OCI-LY7 (cell line): ENCODE measurements at regions of chr11 and their contacts with region 1.

Region 1: DNA sequence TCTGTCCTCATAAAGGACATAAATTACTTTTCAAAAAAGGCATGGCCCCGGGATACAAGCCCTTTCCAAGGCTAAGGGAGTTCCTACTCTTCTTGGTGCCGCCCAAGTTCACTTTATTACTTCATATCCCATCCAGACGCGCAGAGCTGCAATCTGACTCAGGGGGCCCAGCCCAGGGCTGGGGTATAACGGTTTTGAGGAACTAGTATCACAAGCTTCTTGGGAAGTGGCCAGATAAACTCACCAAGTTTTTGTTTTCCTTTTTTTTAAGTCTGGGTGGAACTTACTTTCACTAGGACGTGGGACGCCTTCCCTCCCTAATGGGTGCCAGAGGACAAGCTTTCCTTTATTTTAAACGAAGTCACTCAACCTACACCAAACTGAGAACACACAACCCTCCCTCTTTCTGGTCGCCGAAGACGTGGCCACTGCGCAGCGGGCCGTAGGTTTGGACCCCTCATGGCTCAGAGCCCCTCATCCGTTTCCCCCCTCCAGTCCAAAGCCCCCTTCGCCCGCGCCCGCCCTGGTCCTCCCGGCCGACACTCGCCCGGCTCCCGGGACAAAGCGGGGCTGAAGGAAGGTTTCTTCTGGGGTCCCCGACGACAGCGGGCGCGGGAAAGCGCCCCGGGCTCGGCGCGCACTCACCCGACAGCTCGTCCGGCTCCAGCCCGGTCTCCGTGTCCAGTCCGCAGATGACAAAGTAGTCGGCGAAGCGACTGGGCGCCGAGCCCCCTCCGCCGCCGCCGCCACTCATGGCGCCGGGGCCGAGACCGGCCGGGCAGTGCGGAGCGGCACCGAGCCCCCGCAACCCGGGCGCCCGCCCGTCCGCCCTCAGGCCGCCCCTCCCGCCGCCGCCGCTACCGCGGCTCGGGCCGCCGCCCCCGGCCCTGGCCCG is 587 bp downstream of the DENND5A start:
- DNase-seq: no peak
- H3K4me3 ChIP-seq: peak overlapping the region; percentile 66
- H3K27ac ChIP-seq: no peak overlapping the region
- H3K4me1 ChIP-seq: peaks cover 25% of the 10 kb centered on the region
- CTCF ChIP-seq: no peak

Region 2: DNA sequence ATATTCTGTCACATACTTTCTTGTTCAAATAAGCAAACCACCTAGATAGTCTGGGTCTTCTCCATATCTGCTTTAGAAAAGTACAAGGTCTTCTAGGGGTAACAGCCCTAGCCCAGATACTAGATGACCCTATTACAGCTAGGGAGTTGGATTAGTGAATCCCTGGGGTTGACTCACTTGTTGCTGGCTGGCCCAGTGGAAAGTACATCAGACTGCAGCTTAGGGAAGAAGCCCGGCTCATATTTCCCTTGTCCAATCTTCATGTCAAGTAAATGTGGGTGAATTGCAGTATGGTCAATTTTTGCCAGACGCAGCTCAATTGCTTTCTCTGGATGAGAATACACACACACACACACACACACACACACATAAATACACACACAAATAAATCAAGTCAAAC is 94.1 kb before region 1 on chr11:
- CTCF ChIA-PET with region 1: no interaction called
- POLR2A ChIA-PET with region 1: interaction called, 3 read pairs
- intact Hi-C with region 1: loop called (anchors 5 kb)
- DNase-seq: no peak
- H3K4me3 ChIP-seq: no peak overlapping the region
- H3K27ac ChIP-seq: no peak overlapping the region
- H3K4me1 ChIP-seq: no peaks in the 10 kb centered on the region
- CTCF ChIP-seq: no peak

Region 3: DNA sequence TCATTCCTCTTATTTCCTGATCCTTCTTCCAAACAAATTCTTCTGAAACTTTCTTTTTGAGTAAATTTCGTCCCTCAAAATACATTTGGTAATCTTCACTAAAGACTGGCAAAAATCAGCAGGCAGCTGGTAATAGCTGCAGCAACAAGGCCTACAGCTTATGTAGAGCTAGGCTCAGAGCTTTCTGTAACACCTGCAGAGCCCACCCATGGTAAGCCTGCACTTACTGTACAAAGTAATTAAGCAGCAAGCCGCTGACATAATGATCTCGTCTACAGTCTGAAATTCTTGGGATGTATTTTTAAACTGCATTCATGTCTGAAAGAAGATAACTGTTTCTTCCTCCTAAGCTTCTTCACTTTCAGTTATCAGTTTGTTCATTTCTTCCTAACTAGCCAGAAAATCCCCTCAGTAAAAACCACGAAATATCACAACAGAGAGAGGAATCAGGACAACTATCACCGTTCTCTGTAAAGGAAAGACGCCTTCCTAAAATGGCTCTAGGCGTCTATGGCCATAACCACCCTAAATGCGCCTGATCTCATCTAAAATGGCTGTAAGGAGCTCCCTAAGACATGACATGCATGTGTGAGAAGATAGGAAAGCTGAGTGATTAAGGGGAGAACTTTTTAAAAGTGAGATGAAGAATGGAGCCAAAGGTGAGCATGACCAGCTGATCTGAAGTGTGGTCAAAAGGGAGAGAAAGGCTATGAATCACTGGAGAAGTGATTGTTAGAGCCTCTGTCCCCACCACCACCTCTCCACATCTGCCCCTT is 55.6 kb before region 1 on chr11:
- CTCF ChIA-PET with region 1: no interaction called
- POLR2A ChIA-PET with region 1: no interaction called
- intact Hi-C with region 1: loop called (anchors 5 kb)
- DNase-seq: peak; percentile 32
- H3K4me3 ChIP-seq: no peak overlapping the region
- H3K27ac ChIP-seq: no peak overlapping the region
- H3K4me1 ChIP-seq: peaks cover 17% of the 10 kb centered on the region
- CTCF ChIP-seq: no peak